ENCODE measurements at regions of chr17 and their contacts with region 1.

Region 1: DNA sequence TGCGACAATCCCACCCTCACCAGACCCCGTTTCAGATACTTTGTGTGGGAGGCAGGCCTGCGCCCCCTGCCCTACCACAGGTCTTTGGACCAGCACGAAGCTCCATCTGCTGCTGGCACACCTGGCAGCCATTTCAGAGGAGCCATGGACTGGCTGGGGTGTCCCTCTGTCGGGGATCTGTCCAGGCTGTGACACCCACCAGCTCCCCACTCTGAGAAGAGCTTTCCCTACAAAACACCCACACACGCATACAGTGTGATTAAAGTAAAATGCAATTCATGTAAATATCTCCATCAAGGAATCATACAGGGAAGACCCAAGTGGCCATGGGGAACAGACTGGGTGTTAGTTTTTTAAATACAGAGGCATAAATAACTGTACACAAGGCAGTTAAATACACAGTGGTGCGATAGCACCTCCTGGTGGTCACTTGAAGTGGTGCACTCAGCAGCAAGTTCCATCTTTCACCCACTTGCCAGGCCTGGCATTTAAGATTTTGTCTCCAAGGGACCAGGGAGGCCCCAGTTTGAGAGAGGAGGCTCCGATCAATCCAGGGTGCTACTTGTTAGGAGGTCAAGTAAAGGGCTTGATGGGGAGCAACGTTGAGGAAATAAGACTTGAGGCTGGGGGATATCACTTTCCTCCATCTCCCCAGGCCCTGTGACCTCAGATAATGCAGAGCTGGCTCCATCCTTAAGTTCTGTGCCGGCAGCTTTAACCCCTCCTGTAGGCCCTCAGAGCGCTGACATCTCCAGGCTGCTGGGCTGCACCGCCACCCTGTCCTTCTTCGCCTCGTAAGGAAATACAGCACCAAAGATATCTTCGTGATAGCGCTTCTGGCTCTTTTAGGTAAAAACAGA is 43.6 kb downstream of the NOS2 start:
- DNase-seq: no peak
- ATAC-seq: peak; percentile 42 to 48
- H3K4me3 ChIP-seq: no peak overlapping the region
- H3K27ac ChIP-seq: no peak overlapping the region
- H3K4me1 ChIP-seq: no peaks in the 10 kb centered on the region
- H3K27me3 ChIP-seq: no peaks in the 10 kb centered on the region
- CTCF ChIP-seq: peak; percentile 90

Region 2: DNA sequence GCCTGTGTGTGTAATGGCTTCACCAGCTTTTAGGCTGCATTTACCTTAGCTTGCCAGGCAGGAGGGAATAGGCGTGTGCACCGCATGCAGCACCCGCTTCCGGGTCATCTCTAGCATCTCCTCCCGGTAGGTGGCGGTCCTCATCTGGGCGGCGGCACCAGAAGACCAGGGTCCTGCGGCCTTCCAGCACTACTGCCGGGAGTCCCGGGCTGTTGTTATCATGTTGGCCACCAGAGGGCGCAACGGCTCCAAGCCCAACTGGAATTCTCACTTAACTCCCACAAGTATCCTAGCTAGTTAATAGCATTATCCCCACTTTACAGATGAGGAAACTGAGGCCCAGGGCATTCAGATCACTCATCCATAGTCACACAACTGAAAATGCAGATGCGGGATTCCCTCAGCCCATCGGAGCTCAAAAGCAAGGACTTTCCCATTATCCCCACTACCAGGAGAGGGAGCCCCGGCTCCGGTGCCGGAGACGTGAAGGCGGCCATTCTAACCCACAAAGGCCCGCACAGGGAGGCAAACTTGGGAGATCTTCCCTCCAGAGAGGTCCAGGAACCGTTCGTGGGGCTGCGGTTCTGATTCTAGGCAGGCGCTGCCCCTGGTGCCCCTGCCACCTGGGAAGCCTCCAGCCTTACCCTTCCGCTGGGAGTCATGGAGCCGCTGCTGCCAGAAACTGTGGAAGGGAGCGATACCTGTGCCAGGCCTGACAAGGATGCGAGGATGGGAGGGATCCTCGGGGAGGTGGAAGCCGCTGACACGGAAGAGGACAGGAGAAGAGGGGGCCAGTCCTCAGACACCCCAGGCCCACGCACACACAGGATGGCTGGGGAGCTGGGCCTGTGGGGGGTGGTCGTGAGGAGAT is 101.9 kb before region 1 on chr17:
- intact Hi-C with region 1: loop called (anchors 10 kb)
- DNase-seq: peak; percentile 78
- ATAC-seq: peak; percentile 63 to 66
- H3K4me3 ChIP-seq: no peak overlapping the region
- H3K27ac ChIP-seq: no peak overlapping the region
- H3K4me1 ChIP-seq: no peaks in the 10 kb centered on the region
- H3K27me3 ChIP-seq: no peaks in the 10 kb centered on the region
- CTCF ChIP-seq: peak; percentile 93

Region 3: GRCh38 chr17:27985306-27985705 is 228.6 kb after region 1 on chr17:
- intact Hi-C with region 1: no loop called
- DNase-seq: no peak
- ATAC-seq: no peak
- H3K4me3 ChIP-seq: no peak overlapping the region
- H3K27ac ChIP-seq: no peak overlapping the region
- H3K4me1 ChIP-seq: peaks cover 7% of the 10 kb centered on the region
- H3K27me3 ChIP-seq: no peaks in the 10 kb centered on the region
- CTCF ChIP-seq: no peak